Caco-2 (cell line): ENCODE measurements at regions of chr3 and their contacts with region 1.

Region 1: DNA sequence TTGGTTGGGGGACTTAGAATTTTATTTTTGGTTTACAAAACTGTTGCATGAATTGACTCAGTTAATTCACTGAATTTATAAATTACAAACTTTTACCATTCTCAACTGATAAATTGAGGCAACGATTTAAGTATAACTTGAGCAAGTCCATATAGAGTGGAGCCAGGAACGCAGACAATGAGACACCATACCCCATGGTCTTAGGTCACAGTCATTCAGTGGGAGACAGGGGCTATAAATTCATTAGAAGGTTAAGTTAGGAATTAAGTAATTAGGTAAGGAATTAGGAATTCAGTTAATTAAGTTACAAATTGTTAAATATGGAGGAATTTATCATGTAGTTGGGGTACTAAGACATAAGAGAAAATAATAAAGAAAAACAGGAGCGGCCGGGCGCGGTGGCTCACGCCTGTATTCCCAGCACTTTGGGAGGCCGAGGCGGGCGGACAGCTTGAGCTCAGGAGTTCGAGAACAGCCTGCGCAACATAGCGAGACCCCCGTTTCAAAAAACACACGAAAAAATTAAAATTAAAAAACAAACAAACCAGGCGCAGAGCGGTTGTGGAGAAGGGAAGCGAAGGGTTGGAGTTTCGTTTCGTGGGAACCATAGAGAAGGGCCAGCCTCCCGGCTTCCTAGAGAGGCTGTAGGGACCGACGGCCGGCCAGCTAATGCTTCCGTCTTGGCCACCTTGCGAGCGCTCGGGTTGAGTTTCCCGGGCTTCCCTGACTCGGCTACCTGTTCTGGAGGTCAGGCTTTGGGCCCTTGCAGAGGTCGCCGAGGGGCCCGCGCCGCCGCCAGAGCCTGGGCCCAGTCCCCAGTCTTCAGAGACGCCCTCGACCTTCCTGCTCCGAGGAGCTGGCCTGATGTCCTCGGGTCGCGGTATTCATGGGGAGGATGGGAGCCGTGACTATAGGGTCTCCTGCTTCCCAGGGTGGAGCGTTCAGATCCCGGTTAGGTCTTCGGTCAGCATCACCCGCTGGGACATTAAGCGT is at the start of gene ZNF619:
- DNase-seq: peak; percentile 71
- H3K4me3 ChIP-seq: peak within 1 kb of the TSS; percentile 54
- H3K4me3 Mint-ChIP-seq: peak within 1 kb of the TSS; percentile 81
- H3K27ac Mint-ChIP-seq: peak within 1 kb of the TSS; percentile 88
- H3K4me1 ChIP-seq: peaks cover 3% of the 10 kb centered on the region; the same call in 1 of the 2 replicates
- H3K4me1 Mint-ChIP-seq: peaks cover 10% of the 10 kb centered on the region
- H3K27me3 ChIP-seq: no peaks in the 10 kb centered on the region
- H3K27me3 Mint-ChIP-seq: no peaks in the 10 kb centered on the region
- CTCF ChIP-seq: no peak
- total RNA-seq, gene ZNF619: 4.9 and 6.8 TPM in 2 replicates

Region 2: GRCh38 chr3:40211579-40211978 is 265.2 kb before region 1 on chr3:
- CTCF ChIA-PET with region 1: no interaction called
- POLR2A ChIA-PET with region 1: no interaction called
- intact Hi-C with region 1: no loop called
- DNase-seq: no peak
- H3K4me3 ChIP-seq: no peak overlapping the region
- H3K4me3 Mint-ChIP-seq: no peak overlapping the region
- H3K27ac Mint-ChIP-seq: no peak overlapping the region
- H3K4me1 ChIP-seq: no peaks in the 10 kb centered on the region
- H3K4me1 Mint-ChIP-seq: no peaks in the 10 kb centered on the region
- H3K27me3 ChIP-seq: no peaks in the 10 kb centered on the region
- H3K27me3 Mint-ChIP-seq: peaks cover 12% of the 10 kb centered on the region
- CTCF ChIP-seq: no peak

Region 3: DNA sequence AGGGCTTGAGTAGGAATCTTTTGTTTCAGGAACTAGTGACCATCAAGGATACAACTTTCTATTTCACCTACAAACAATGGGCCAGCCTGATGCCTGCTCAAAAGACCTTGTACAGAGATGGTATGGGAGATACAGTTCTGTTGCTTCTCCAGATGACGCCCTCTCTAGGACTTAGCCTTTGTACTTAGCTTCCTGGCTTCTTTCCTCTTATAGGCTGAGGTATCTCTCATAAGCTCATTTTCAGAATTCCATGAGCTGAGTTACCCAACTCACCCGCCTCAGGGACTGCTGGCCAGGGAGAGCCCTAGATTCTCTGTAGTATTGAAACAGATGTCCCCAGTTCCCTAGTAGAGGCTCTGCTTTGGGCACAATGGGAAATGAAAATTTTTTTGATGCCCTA is 20.5 kb after region 1 on chr3:
- CTCF ChIA-PET with region 1: no interaction called
- POLR2A ChIA-PET with region 1: no interaction called
- intact Hi-C with region 1: loop called (anchors 2 kb)
- DNase-seq: no peak
- H3K4me3 ChIP-seq: no peak overlapping the region
- H3K4me3 Mint-ChIP-seq: no peak overlapping the region
- H3K27ac Mint-ChIP-seq: no peak overlapping the region
- H3K4me1 ChIP-seq: no peaks in the 10 kb centered on the region
- H3K4me1 Mint-ChIP-seq: no peaks in the 10 kb centered on the region
- H3K27me3 ChIP-seq: no peaks in the 10 kb centered on the region
- H3K27me3 Mint-ChIP-seq: no peaks in the 10 kb centered on the region
- CTCF ChIP-seq: no peak

Region 4: GRCh38 chr3:40524568-40525285 is 48.0 kb after region 1 on chr3 and contains the start of gene ZNF621:
- CTCF ChIA-PET with region 1: no interaction called
- POLR2A ChIA-PET with region 1: no interaction called
- intact Hi-C with region 1: loop called (anchors 2 kb)
- DNase-seq: peak; percentile 90 to 95
- H3K4me3 ChIP-seq: peak within 1 kb of the TSS; percentile 91
- H3K4me3 Mint-ChIP-seq: peak within 1 kb of the TSS; percentile 97
- H3K27ac Mint-ChIP-seq: peak within 1 kb of the TSS; percentile 99
- H3K4me1 ChIP-seq: no peaks in the 10 kb centered on the region
- H3K4me1 Mint-ChIP-seq: no peaks in the 10 kb centered on the region
- H3K27me3 ChIP-seq: no peaks in the 10 kb centered on the region
- H3K27me3 Mint-ChIP-seq: no peaks in the 10 kb centered on the region
- CTCF ChIP-seq: no peak
- total RNA-seq, gene ZNF621: 23.6 and 23.7 TPM in 2 replicates

Region 5: GRCh38 chr3:40550167-40550566 is 73.4 kb after region 1 on chr3:
- CTCF ChIA-PET with region 1: no interaction called
- POLR2A ChIA-PET with region 1: no interaction called
- intact Hi-C with region 1: no loop called
- DNase-seq: no peak
- H3K4me3 ChIP-seq: no peak overlapping the region
- H3K4me3 Mint-ChIP-seq: no peak overlapping the region
- H3K27ac Mint-ChIP-seq: no peak overlapping the region
- H3K4me1 ChIP-seq: no peaks in the 10 kb centered on the region
- H3K4me1 Mint-ChIP-seq: no peaks in the 10 kb centered on the region
- H3K27me3 ChIP-seq: no peaks in the 10 kb centered on the region
- H3K27me3 Mint-ChIP-seq: no peaks in the 10 kb centered on the region
- CTCF ChIP-seq: no peak